ENCODE measurements at regions of chr6 and their contacts with region 1.

Region 1: DNA sequence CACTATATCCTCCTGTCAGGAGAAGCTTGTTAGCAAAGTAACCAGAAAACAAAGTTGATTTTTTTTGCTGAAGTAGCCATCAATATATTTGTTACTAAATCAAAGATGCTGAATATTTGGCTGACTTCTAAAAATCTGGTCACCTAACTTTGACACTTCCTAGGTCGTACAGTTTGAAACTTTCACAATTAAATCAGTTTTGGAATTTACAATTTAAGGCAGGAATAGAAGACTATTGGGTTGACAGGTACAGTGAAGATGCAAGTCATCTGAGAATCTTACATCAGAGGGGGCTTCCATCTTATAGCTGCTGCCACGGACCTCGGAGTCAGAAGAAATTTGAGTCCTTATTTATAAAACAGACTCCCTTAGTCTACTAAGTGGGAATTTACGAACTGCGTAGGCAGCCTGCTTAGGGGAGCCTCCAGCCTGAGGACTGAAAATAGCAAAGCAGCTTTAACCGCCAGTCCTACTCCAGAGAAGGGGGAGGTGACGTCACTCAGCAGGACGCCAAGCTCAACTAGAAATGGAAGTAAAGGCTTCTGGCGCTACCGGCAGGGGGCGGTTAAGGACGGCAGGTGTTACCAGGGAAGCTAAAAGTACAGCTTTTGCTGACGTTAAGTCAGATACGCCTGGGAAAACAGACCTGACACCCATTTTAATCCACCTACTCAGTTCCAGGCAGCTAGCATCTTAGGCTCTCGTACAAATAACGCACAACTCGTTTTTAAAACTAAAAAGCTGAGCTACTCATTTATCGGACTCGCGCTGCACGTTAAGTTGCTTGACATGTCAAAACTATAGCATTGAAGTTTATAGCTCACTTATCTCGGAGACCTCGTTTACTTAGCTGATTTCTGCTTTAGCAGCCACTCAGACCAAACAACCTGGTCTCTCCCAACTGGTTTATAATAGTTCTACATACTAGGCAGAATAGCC is 61.1 kb upstream of the HFE start:
- DNase-seq: peak; percentile 97
- ATAC-seq: peak; percentile 35
- H3K4me3 ChIP-seq: peak overlapping the region; percentile 58 to 99 (median 88)
- H3K4me3 Mint-ChIP-seq: peak overlapping the region; percentile 98
- H3K27ac ChIP-seq: peak overlapping the region; percentile 88 to 97
- H3K27ac Mint-ChIP-seq: peak overlapping the region; percentile 98
- H3K4me1 ChIP-seq: peaks cover 23 to 32% of the 10 kb centered on the region in 2 donors
- H3K4me1 Mint-ChIP-seq: peaks cover 49% of the 10 kb centered on the region
- H3K27me3 ChIP-seq: no peaks in the 10 kb centered on the region
- H3K27me3 Mint-ChIP-seq: no peaks in the 10 kb centered on the region
- CTCF ChIP-seq: peak; percentile 92

Region 2: DNA sequence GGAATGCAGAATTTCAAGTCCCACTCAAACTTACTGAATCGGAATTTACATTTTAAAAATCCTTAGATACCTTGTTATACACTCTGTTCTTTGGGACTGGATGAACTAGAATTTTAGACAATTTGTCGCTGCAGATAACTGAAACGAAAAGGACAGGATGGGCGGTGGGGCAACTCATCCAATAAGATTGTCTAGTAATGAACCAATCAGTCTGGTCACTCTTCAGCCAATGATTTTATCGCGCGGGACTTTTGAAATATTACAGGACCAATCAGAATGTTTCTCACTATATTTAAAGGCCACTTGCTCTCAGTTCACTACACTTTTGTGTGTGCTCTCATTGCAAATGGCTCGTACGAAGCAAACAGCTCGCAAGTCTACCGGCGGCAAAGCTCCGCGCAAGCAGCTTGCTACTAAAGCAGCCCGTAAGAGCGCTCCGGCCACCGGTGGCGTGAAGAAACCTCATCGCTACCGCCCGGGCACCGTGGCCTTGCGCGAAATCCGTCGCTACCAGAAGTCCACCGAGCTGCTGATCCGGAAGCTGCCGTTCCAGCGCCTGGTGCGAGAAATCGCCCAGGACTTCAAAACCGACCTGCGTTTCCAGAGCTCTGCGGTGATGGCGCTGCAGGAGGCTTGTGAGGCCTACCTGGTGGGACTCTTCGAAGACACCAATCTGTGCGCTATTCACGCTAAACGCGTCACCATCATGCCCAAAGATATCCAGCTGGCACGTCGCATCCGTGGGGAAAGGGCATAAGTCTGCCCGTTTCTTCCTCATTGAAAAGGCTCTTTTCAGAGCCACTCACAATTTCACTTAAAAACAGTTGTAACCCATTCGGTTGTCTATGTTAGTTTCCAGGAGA is 19.1 kb after region 1 on chr6:
- CTCF ChIA-PET with region 1: interaction called, 55 read pairs
- POLR2A ChIA-PET with region 1: interaction called, 111 read pairs
- intact Hi-C with region 1: loop called (anchors 1 kb)
- DNase-seq: peak; percentile 90
- ATAC-seq: peak; percentile 58
- H3K4me3 ChIP-seq: peak overlapping the region; percentile 56 to 98 (median 69)
- H3K4me3 Mint-ChIP-seq: peak overlapping the region; percentile 87
- H3K27ac ChIP-seq: peak overlapping the region; percentile 85 to 89
- H3K27ac Mint-ChIP-seq: peak overlapping the region; percentile 99
- H3K4me1 ChIP-seq: peaks cover 14 to 29% of the 10 kb centered on the region in 2 donors
- H3K4me1 Mint-ChIP-seq: peaks cover 17% of the 10 kb centered on the region
- H3K27me3 ChIP-seq: no peaks in the 10 kb centered on the region
- H3K27me3 Mint-ChIP-seq: no peaks in the 10 kb centered on the region
- CTCF ChIP-seq: no peak

Region 3: DNA sequence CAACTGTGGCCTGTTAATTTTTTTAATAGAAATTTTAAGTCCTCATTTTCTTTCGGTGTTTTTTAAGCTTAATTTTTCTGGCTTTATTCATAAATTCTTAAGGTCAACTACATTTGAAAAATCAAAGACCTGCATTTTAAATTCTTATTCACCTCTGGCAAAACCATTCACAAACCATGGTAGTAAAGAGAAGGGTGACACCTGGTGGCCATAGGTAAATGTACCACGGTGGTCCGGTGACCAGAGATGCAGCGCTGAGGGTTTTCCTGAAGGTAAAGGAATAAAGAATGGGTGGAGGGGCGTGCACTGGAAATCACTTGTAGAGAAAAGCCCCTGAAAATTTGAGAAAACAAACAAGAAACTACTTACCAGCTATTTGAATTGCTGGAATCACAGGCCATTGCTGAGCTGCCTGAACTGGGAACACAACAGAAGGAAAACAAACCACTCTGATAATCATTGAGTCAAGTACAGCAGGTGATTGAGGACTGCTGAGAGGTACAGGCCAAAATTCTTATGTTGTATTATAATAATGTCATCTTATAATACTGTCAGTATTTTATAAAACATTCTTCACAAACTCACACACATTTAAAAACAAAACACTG is 71.2 kb after region 1 on chr6:
- CTCF ChIA-PET with region 1: interaction called, 23 read pairs
- POLR2A ChIA-PET with region 1: interaction called, 5 read pairs
- intact Hi-C with region 1: loop called (anchors 1 kb)
- DNase-seq: peak; percentile 80
- ATAC-seq: peak; percentile 80
- H3K4me3 ChIP-seq: no peak overlapping the region
- H3K4me3 Mint-ChIP-seq: no peak overlapping the region
- H3K27ac ChIP-seq: no peak overlapping the region
- H3K27ac Mint-ChIP-seq: no peak overlapping the region
- H3K4me1 ChIP-seq: peaks cover 6 to 9% of the 10 kb centered on the region in 2 donors
- H3K4me1 Mint-ChIP-seq: peaks cover 17% of the 10 kb centered on the region
- H3K27me3 ChIP-seq: no peaks in the 10 kb centered on the region
- H3K27me3 Mint-ChIP-seq: no peaks in the 10 kb centered on the region
- CTCF ChIP-seq: peak; percentile 89

Region 4: DNA sequence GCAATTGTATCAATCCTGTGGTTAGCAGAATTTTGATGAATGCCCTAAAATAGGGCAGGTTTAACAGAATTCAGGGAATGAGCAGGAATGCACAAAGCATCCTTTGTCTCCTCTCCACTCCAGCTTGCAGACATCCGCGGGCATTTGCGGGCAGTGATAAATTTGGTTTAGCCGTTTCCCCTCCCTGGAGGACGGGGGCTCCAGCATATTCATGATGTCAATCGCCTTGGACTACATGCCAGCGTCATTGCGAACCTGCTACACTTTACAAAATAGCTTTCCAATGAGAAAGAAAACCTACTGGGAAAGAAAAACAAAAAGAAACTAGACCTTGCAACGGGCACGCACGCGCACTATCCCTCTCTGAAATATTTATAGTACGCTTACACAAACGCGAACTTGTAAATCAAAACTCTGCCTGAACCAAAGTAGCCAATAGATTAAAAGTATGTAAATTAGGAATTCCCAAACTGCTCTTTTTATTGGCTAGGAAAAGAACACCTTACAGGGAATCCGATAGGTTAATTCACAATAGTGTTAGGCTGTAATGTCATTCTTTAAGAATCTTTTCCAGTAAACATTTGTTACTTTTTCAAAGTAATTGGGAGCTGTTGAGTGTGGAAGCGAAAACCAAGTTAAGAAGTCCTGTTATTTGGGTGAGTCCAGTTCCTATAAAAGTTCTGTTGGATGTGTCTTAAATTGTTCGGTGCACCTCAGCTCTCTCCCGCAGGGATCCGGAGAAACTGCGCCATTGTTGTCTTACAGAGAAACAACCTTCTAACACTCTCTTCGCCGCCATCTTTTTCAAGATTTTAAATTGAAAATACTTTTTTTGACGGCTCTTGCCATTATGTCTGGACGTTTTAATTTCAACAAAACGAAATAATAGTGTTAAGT is 197.7 kb after region 1 on chr6:
- CTCF ChIA-PET with region 1: no interaction called
- POLR2A ChIA-PET with region 1: interaction called, 10 read pairs
- intact Hi-C with region 1: no loop called
- DNase-seq: peak; percentile 81
- ATAC-seq: peak; percentile 87
- H3K4me3 ChIP-seq: peak overlapping the region; percentile 56 to 97 (median 75)
- H3K4me3 Mint-ChIP-seq: no peak overlapping the region
- H3K27ac ChIP-seq: peak overlapping the region; percentile 85 to 95
- H3K27ac Mint-ChIP-seq: no peak overlapping the region
- H3K4me1 ChIP-seq: peaks cover 4 to 14% of the 10 kb centered on the region in 2 donors
- H3K4me1 Mint-ChIP-seq: peaks cover 8% of the 10 kb centered on the region
- H3K27me3 ChIP-seq: no peaks in the 10 kb centered on the region
- H3K27me3 Mint-ChIP-seq: no peaks in the 10 kb centered on the region
- CTCF ChIP-seq: no peak

Region 5: DNA sequence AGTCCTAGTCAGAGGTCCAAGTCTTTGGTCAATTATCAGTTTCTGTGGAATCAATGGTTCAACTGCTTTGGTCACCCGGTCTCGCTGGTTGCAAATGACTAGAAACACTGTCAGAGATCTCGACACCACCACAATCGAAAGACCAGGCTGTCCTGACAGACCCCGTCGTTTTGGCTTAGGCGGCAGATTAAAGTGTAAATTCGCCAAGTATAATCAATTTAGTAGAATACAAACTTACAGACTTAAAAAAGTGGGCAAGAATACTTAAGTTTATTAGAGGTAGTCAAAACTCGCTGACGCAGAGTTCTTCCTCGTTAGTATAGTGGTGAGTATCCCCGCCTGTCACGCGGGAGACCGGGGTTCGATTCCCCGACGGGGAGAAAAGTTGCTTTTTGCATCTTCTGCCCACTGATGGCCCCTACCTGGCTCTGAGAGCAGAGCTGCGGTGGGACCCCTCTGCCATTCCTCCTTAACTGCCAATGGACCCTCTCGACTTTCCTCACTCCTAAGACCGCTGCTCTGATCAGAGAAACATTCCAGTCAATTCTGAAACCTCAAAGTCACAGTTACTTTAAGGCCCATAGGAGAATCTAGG is 1477.4 kb after region 1 on chr6:
- CTCF ChIA-PET with region 1: no interaction called
- POLR2A ChIA-PET with region 1: no interaction called
- intact Hi-C with region 1: loop called (anchors 10 kb)
- DNase-seq: peak; percentile 89
- ATAC-seq: peak; percentile 44
- H3K4me3 ChIP-seq: peak overlapping the region; percentile 48 to 82 (median 74)
- H3K4me3 Mint-ChIP-seq: peak overlapping the region; percentile 85
- H3K27ac ChIP-seq: peak overlapping the region in 1 of 2 donors; percentile 64
- H3K27ac Mint-ChIP-seq: peak overlapping the region; percentile 81
- H3K4me1 ChIP-seq: peaks cover 9 to 24% of the 10 kb centered on the region in 2 donors
- H3K4me1 Mint-ChIP-seq: peaks cover 38% of the 10 kb centered on the region
- H3K27me3 ChIP-seq: peaks cover 0 to 4% (median 1%) of the 10 kb centered on the region in 4 experiments
- H3K27me3 Mint-ChIP-seq: peaks cover 9% of the 10 kb centered on the region
- CTCF ChIP-seq: no peak